Ovary (tissue), 10 donors: ENCODE measurements at regions of chr22 and their contacts with region 1.

Region 1: DNA sequence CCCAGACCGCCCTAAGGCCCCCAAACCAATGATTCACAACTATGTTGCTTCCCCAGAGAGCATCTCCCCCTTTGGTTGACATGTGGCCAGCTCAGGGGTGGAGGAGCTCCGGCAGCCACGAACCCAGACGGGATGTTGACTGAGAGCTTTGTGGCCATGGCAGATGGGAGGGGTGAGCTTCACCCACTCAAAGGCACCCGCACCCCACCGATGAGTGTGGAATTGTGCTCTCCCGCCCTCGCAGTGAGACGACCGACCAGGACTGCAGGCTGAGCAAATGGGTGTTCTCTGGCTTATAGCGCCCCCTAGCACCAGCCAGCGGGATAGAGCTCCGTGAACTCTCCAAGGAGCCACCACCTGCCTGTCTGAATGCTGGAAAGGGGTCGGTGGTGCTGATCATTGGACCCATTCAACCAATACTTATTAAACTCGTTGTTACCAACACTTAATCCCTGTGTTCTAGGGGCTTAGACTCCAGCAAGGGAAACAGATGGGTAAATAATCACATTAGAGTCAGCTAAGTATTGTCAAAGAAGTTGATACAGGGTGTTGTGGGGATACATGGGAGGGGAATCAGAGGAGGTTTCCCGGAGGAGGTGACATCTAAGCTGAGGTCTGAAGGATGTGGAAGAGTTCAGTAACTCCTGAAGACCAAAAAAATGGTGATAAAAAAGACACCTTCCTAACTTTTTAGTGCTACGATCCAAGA is 4.5 kb upstream of the TIMP3 start:
- DNase-seq: peak; percentile 44 to 77 (median 65)
- H3K4me3 ChIP-seq: no peak overlapping the region
- H3K27ac ChIP-seq: no peak overlapping the region
- H3K4me1 ChIP-seq: peaks cover 2% of the 10 kb centered on the region
- H3K27me3 ChIP-seq: no peaks in the 10 kb centered on the region
- CTCF ChIP-seq: peak; percentile 24 to 86 (median 52)
- EP300 ChIP-seq: no peak
- POLR2A ChIP-seq: no peak

Region 2: DNA sequence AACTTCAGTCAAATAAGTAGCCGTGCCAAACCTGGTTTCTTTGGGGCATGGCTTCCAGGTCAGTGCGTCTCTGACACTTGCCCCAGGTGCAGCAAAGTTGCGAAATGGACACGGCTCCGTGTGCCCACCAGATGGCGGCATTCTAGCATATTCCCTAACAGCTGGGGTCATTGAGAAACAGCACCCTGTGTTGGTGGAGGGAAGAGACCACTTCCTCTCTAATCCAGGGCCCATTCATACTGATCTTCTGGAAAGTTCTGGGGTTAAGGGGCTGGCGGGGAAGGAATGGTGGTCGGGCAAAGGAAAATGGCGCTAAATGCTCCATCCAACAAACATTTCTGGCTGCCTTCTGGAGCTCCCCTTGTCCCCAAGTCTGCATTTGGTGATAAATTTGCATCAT is 136.7 kb before region 1 on chr22:
- intact Hi-C with region 1: loop called in 2 of 4 experiments (anchors 10 kb)
- DNase-seq: peak; percentile 33 to 69 (median 57)
- H3K4me3 ChIP-seq: no peak overlapping the region
- H3K27ac ChIP-seq: no peak overlapping the region
- H3K4me1 ChIP-seq: no peaks in the 10 kb centered on the region
- H3K27me3 ChIP-seq: no peaks in the 10 kb centered on the region
- CTCF ChIP-seq: peak; percentile 19 to 52 (median 36)
- EP300 ChIP-seq: no peak
- POLR2A ChIP-seq: no peak

Region 3: GRCh38 chr22:32830473-32830872 is 33.5 kb after region 1 on chr22:
- intact Hi-C with region 1: loop called in 1 of 4 experiments (anchors 1 kb)
- DNase-seq: peak in 3 of 5 donors; percentile 50 to 53 (median 51)
- H3K4me3 ChIP-seq: no peak overlapping the region
- H3K27ac ChIP-seq: no peak overlapping the region
- H3K4me1 ChIP-seq: peaks cover 4% of the 10 kb centered on the region
- H3K27me3 ChIP-seq: no peaks in the 10 kb centered on the region
- CTCF ChIP-seq: no peak
- EP300 ChIP-seq: no peak
- POLR2A ChIP-seq: no peak

Region 4: GRCh38 chr22:32862936-32863661 is 66.1 kb after region 1 on chr22:
- intact Hi-C with region 1: no loop called
- DNase-seq: no peak
- H3K4me3 ChIP-seq: no peak overlapping the region
- H3K27ac ChIP-seq: no peak overlapping the region
- H3K4me1 ChIP-seq: no peaks in the 10 kb centered on the region
- H3K27me3 ChIP-seq: no peaks in the 10 kb centered on the region
- CTCF ChIP-seq: no peak
- EP300 ChIP-seq: no peak
- POLR2A ChIP-seq: no peak

Region 5: GRCh38 chr22:32874976-32875375 is 78.0 kb after region 1 on chr22:
- intact Hi-C with region 1: no loop called
- DNase-seq: no peak
- H3K4me3 ChIP-seq: no peak overlapping the region
- H3K27ac ChIP-seq: no peak overlapping the region
- H3K4me1 ChIP-seq: no peaks in the 10 kb centered on the region
- H3K27me3 ChIP-seq: no peaks in the 10 kb centered on the region
- CTCF ChIP-seq: no peak
- EP300 ChIP-seq: no peak
- POLR2A ChIP-seq: no peak

Region 6: GRCh38 chr22:32991353-32992121 is 194.5 kb after region 1 on chr22:
- intact Hi-C with region 1: loop called in 2 of 4 experiments (anchors 10 kb)
- DNase-seq: no peak
- H3K4me3 ChIP-seq: no peak overlapping the region
- H3K27ac ChIP-seq: no peak overlapping the region
- H3K4me1 ChIP-seq: peaks cover 9% of the 10 kb centered on the region
- H3K27me3 ChIP-seq: no peaks in the 10 kb centered on the region
- CTCF ChIP-seq: no peak
- EP300 ChIP-seq: no peak
- POLR2A ChIP-seq: no peak